Activated T-helper 2 cell treated with anti-CD3 and anti-CD28 coated beads, Interferon-gamma antibody, Interleukin-2, Interleukin-4, amounts not matched to agents 10 μg/mL and 5 μg/mL and 100 μg/mL, durations not matched to agents 14 hours and 24 hours and 36 hours (primary cell): ENCODE measurements at regions of chr6 and their contacts with region 1.

Region 1: GRCh38 chr6:160992061-160992979 is 751 bp downstream of the MAP3K4 start:
- DNase-seq: no peak
- H3K4me3 Mint-ChIP-seq: peak overlapping the region; percentile 92
- H3K27ac Mint-ChIP-seq: peak overlapping the region; percentile 85
- H3K4me1 Mint-ChIP-seq: peaks cover 21% of the 10 kb centered on the region
- H3K27me3 Mint-ChIP-seq: peaks cover 14% of the 10 kb centered on the region

Region 2: DNA sequence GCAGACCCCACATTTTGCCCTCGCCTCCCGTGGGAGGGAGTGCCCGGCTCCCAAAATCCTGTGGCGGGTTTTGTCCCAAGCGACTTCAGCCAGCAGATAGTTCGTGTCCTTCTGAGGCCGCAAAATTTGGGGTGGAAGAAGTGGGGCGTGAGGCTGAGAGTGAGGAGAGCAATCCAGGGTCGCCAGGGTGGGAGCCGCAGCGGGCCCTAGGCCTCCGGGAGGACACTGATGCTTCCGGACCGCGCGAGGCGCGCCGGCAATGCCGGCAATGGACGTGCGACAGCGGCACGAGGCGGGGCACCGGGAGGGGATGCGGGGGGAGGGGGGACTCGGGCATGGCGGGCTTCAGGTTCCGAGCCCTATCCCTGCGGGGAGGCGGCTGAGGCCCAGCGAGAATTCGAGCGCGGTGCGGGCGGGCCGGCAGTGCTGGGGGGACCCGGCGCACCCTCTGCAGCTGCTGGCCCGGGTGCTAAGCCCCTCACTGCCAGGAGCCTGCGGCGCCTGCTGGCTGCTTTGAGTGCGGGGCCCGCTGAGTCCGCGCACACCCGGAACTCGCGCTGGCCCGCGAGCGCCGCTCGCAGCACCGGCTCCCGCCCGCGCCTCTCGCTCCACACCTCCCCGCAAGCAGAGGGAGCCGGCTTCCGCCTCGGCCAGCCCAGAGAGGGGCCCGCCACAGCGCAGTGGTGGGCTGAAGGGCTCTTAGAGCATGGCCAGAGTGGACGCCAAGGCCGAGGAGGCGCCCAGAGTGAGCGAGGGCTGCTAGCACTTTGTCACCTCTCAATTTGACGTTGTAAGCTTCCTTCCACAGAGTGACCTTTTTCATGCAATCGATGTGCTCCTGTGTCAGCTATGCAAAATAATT is 472.0 kb before region 1 on chr6:
- intact Hi-C with region 1: loop called (anchors 5 kb)
- DNase-seq: peak; percentile 64
- H3K4me3 Mint-ChIP-seq: peak overlapping the region; percentile 90
- H3K27ac Mint-ChIP-seq: peak overlapping the region; percentile 87
- H3K4me1 Mint-ChIP-seq: peaks cover 18% of the 10 kb centered on the region
- H3K27me3 Mint-ChIP-seq: peaks cover 48% of the 10 kb centered on the region

Region 3: GRCh38 chr6:161079566-161080262 is 87.4 kb after region 1 on chr6:
- intact Hi-C with region 1: loop called (anchors 2 kb)
- DNase-seq: no peak
- H3K4me3 Mint-ChIP-seq: no peak overlapping the region
- H3K27ac Mint-ChIP-seq: peak overlapping the region; percentile 68
- H3K4me1 Mint-ChIP-seq: peaks cover 4% of the 10 kb centered on the region
- H3K27me3 Mint-ChIP-seq: no peaks in the 10 kb centered on the region

Region 4: DNA sequence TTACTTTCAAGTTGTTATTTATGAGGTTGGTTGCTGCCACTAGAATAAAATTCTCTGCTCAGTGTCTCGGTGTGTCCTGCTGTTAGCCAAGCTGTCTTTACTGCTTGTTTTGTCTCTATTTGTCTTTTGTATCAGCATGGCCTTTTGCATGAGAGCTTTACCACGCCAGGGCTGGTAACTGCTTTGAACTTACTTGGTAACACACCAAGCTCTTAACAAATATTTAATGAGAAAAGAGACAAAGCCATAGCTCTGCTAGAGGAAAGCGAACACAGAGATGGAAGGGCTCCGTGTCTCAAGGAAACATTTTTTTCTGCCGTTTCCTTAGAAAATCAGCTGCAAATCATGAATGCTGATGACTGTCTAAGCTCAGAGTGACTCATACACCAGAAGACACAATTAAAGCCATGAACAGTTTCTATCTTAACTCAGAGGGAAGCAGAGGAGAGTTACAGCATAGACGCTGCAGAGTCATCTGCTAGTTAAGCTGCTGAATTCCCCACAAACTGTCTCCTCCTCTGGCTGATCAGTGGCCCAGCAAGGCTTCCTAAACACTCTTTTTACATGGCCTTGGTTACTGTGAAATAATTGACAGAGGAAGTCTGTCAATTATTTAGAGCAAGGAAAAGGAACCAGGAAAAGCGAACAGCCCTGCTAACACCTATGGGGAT is 236.7 kb after region 1 on chr6:
- intact Hi-C with region 1: loop called (anchors 5 kb)
- DNase-seq: no peak
- H3K4me3 Mint-ChIP-seq: peak overlapping the region; percentile 7
- H3K27ac Mint-ChIP-seq: peak overlapping the region; percentile 69
- H3K4me1 Mint-ChIP-seq: peaks cover 50% of the 10 kb centered on the region
- H3K27me3 Mint-ChIP-seq: no peaks in the 10 kb centered on the region

Region 5: DNA sequence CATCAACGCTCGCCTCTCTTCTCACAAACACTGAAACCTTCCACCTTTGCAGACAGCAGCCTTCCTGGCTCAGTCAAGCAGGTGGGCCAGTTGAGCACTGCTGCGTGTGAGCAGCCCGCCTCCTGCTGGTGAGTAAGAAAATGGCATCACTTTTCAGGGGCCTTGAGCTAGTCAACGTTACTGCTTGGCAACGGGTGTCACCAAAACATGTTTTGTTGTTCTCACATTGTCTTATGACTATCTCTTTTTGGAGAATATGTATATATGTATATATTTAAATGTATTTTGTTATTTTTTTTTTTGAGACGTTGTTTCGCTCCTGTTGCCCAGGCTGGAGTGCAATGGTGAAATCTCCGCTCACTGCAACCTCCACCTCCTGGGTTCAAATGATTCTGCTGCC is 378.6 kb after region 1 on chr6:
- intact Hi-C with region 1: loop called (anchors 5 kb)
- DNase-seq: peak; percentile 51
- H3K4me3 Mint-ChIP-seq: no peak overlapping the region
- H3K27ac Mint-ChIP-seq: no peak overlapping the region
- H3K4me1 Mint-ChIP-seq: peaks cover 1% of the 10 kb centered on the region
- H3K27me3 Mint-ChIP-seq: no peaks in the 10 kb centered on the region